OCI-LY7 (cell line): ENCODE measurements at regions of chr2 and their contacts with region 1.

Region 1: GRCh38 chr2:7567646-7568045 is 650.4 kb downstream of the RNF144A start:
- DNase-seq: peak; percentile 94
- H3K4me3 ChIP-seq: peak overlapping the region; percentile 31
- H3K27ac ChIP-seq: peak overlapping the region; percentile 80
- H3K4me1 ChIP-seq: peaks cover 33% of the 10 kb centered on the region
- CTCF ChIP-seq: peak; percentile 76

Region 2: DNA sequence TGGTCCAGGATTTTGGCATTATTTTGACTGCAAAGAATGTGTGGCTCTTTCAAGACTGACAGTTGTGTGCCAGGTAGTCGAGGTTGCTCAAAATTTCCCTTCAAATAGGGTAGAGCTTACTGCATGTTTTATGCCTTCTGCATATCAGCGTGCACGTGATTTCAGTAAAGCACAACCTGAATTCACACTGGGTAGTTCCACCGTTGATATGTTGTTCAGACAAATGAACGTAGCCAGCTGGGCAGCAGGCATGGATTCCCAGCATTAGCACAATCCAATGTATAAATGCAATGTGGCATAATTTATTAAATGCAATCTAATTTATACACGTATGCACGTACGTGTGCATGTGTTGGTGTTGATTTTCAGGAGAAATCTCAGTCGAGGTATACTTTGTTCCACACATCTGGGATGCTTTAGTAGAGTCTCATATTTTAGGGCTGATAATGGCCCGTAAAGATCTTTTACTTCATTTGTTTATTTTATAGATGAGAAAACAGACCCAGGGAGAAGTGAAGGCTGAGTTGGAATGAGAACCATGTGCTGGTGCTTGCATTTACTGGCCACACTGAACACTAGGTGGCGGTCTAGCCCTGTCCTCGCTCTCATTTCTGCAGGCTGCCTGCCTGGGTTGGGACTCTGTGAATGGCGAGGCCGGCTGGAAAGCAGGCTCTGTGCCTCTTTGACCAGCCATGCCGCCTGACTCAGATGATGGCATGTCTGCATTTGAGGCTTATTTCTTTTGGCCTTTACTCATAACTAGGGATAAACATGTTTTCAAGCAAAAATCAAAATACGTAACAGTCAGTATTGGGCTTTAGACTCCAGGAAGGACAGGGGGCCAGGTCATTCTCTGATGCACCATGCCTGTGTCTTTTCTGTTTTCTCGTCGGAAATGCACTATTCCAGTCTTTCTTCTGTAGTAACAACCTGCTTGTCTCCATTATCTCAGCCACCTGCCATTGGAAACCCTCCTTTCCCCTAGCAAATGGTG is 530.0 kb before region 1 on chr2:
- CTCF ChIA-PET with region 1: no interaction called
- POLR2A ChIA-PET with region 1: no interaction called
- intact Hi-C with region 1: no loop called
- DNase-seq: peak; percentile 79
- H3K4me3 ChIP-seq: no peak overlapping the region
- H3K27ac ChIP-seq: no peak overlapping the region
- H3K4me1 ChIP-seq: no peaks in the 10 kb centered on the region
- CTCF ChIP-seq: peak; percentile 94

Region 3: GRCh38 chr2:7595206-7595605 is 27.6 kb after region 1 on chr2:
- CTCF ChIA-PET with region 1: interaction called, 4 read pairs
- POLR2A ChIA-PET with region 1: interaction called, 13 read pairs
- intact Hi-C with region 1: loop called (anchors 1 kb)
- DNase-seq: peak; percentile 84
- H3K4me3 ChIP-seq: peak overlapping the region; percentile 39
- H3K27ac ChIP-seq: peak overlapping the region; percentile 82
- H3K4me1 ChIP-seq: peaks cover 37% of the 10 kb centered on the region
- CTCF ChIP-seq: no peak

Region 4: DNA sequence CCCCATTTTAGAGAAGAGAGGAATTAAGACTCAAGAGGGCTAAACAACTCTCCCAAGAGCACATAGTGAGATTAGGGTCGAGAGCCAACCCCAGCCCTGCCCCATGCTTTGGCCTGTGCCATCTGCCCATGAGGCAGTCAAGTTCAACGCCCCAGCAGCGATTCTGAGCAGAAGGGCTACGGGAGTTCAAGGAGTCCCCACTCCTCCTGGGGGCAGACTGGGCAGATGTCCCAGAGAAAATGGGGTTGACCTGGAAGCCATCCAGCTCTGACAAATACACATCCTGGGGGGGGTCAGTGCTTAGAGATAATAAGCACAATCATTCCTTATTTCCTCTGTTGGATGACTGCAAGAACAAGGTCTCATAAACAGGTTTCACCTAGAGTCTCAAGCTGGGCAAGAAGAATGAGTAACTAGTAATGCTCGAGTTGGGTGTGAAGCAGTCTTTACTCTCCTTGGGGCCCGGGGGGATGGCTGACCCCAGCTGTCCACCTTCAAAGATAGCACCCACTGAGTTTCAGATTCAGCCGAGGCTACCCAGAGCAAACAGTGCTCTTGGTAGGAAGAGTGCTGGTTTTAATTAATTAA is 66.0 kb after region 1 on chr2:
- CTCF ChIA-PET with region 1: interaction called, 3 read pairs
- POLR2A ChIA-PET with region 1: interaction called, 5 read pairs
- intact Hi-C with region 1: loop called (anchors 1 kb)
- DNase-seq: peak; percentile 25
- H3K4me3 ChIP-seq: no peak overlapping the region
- H3K27ac ChIP-seq: peak overlapping the region; percentile 62
- H3K4me1 ChIP-seq: peaks cover 34% of the 10 kb centered on the region
- CTCF ChIP-seq: no peak

Region 5: DNA sequence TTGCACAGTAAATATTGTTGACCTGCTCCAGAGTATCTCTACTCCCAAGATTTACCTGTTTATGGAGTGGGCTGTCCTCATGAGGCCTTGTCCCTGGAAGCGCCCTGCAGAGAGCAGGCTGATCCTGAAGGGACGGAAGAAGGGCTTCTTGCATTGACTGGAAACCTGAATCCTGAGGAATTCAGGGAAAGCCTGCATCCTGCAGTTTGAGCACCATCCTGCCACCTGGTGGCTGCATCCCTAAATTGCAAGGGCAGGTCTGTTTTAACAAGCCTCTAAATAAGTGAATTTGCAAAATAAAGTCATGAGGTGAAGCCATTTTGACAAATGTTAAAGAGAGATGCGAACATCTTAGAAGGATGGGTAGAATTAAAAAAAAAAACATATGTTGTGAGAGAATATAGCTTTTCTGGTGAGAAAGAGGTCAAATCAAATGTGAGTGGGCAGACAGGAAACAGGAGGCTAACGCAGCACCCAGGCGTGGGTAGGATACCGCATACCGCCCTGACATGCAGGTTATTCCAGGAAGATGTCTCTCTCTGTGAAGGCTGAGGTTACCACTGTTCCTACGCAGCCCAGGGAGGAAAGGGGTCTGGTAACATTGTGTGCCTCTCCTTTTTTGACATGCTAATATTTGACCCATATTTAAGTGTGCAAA is 104.5 kb after region 1 on chr2:
- CTCF ChIA-PET with region 1: interaction called, 11 read pairs
- POLR2A ChIA-PET with region 1: interaction called, 4 read pairs
- intact Hi-C with region 1: loop called (anchors 1 kb)
- DNase-seq: peak; percentile 52
- H3K4me3 ChIP-seq: no peak overlapping the region
- H3K27ac ChIP-seq: no peak overlapping the region
- H3K4me1 ChIP-seq: peaks cover 4% of the 10 kb centered on the region
- CTCF ChIP-seq: peak; percentile 96